Psoas muscle (tissue), 8 donors: ENCODE measurements at regions of chr13 and their contacts with region 1.

Region 1: GRCh38 chr13:41811588-41812021 is 149.3 kb downstream of the VWA8 start:
- DNase-seq: no peak
- ATAC-seq: peak in 1 of 4 donors; percentile 48
- H3K4me3 ChIP-seq: no peak overlapping the region
- H3K27ac ChIP-seq: no peak overlapping the region
- H3K4me1 ChIP-seq: no peaks in the 10 kb centered on the region
- H3K27me3 ChIP-seq: no peaks in the 10 kb centered on the region
- CTCF ChIP-seq: no peak

Region 2: DNA sequence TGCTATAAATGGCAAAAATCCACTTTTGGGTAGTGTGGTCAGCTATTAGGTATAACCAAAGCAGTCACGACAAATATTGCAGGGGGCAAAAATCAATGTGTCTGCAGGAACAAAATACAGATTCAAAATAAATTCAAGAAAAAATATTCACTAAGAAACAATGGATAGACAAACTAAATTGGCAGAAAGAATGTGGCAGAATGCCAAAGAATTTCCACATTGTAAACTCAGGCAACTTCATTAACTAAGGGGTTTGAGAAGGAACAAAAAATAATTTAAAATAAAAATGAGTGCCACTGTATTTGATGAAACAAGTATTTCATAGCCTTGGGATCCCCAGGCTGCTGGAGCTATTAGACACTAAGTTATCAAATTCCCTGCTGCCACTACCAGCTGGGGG is 43.8 kb before region 1 on chr13:
- intact Hi-C with region 1: loop called in 1 of 2 experiments (anchors 10 kb)
- DNase-seq: no peak
- ATAC-seq: no peak
- H3K4me3 ChIP-seq: no peak overlapping the region
- H3K27ac ChIP-seq: no peak overlapping the region
- H3K4me1 ChIP-seq: no peaks in the 10 kb centered on the region
- H3K27me3 ChIP-seq: no peaks in the 10 kb centered on the region
- CTCF ChIP-seq: no peak

Region 3: GRCh38 chr13:41780715-41781706 is 30.6 kb before region 1 on chr13:
- intact Hi-C with region 1: no loop called
- DNase-seq: no peak
- ATAC-seq: peak; percentile 56 to 79 (median 69)
- H3K4me3 ChIP-seq: no peak overlapping the region
- H3K27ac ChIP-seq: no peak overlapping the region
- H3K4me1 ChIP-seq: peaks cover 9% of the 10 kb centered on the region
- H3K27me3 ChIP-seq: no peaks in the 10 kb centered on the region
- CTCF ChIP-seq: no peak